ENCODE measurements at regions of chr16 and their contacts with region 1.

Region 1: DNA sequence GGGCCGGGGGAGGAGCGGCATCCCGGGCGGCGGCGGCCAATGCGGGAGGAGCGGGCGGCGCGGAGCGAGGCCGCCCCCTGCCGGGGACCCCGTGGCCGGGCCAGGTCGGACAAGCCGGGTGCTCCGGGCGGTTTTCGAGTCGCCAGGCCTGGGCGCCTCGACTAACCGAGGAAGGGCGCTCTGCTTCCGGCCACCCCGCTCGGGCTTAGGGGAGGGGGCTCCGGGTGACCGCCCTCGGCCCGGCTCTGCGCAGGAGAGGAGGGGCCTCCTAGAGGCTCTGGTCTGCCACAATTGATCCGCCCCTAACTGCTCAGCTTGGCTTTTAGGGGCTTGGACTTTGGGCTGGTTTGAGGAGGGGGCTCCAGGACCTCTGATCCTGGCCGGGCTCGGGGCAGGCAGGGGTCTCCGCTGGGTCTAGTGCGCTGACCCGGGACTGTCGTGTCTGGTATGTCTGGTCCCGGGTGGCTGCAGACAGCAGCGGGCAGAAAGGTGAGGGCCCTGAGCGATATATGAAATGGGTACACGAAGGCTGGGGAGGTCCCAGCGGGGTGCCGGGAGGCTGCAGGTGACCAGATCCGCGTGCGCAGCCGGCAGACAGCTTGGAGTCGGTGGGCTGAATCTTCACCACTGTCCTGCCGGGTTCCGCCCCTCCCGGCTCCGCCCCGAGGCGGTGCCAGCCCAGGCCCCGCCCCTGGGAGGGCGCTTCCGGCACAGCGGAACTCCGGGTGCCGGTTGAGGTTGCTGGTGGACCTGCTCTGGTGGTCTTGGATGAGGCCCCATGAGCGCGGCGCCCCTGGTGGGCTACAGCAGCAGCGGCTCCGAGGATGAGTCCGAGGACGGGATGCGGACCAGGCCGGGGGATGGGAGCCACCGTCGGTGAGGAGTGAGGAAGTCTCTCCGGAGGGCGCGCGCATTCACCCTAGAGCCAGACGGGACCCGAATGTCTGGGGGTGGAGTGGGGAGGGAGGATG is at the start of gene USB1:
- DNase-seq: peak; percentile 37 to 90
- H3K4me3 ChIP-seq: peak within 1 kb of the TSS; percentile 78 to 93
- H3K27ac ChIP-seq: peak within 1 kb of the TSS; percentile 85 to 95
- H3K4me1 ChIP-seq: peaks cover 12 to 19% of the 10 kb centered on the region in 2 donors
- H3K27me3 ChIP-seq: no peaks in the 10 kb centered on the region
- CTCF ChIP-seq: peak; percentile 47 to 64 (median 63)
- total RNA-seq, gene USB1: 133 TPM

Region 2: DNA sequence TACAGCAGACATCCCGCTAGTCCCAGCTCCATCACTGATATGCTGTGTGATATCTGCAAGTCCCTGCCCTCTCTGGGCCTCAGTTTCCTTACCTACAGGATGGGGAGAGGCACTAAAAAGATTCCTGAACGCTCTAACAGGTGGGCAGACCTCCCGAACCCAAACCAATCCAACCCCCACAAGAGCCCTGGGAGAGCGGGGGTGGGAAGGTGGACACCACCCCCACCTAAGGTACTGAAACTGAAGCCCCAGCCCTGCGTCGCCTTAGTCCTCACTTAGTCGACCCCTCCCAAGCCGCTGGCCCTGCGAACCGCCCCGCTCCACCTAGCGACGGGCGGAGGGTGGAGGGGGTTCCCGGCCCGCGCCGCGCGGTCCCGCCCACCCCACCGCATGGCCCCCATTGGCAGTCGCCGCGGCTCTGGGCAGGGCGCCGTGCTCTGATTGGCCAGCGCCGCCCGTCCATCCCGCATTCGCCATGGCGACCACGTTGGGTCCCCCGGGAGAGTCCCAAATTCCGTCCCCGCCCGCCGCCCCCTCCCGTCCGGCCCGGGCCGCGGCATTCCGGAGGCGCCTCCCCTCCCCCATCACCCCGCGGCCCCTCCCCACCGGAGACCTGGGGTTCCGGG is 465.2 kb before region 1 on chr16:
- intact Hi-C with region 1: loop called (anchors 2 kb)
- DNase-seq: peak; percentile 74 to 97
- H3K4me3 ChIP-seq: peak overlapping the region; percentile 92 to 93
- H3K27ac ChIP-seq: peak overlapping the region; percentile 89 to 90
- H3K4me1 ChIP-seq: peaks cover 19 to 24% of the 10 kb centered on the region in 2 donors
- H3K27me3 ChIP-seq: no peaks in the 10 kb centered on the region
- CTCF ChIP-seq: peak in 2 of 3 experiments; percentile 21 to 27

Region 3: GRCh38 chr16:57757326-57757786 is 243.6 kb before region 1 on chr16:
- intact Hi-C with region 1: loop called (anchors 1 kb)
- DNase-seq: peak; percentile 46 to 93
- H3K4me3 ChIP-seq: no peak overlapping the region
- H3K27ac ChIP-seq: no peak overlapping the region
- H3K4me1 ChIP-seq: no peaks in the 10 kb centered on the region
- H3K27me3 ChIP-seq: no peaks in the 10 kb centered on the region
- CTCF ChIP-seq: peak; percentile 92 to 98 (median 92)

Region 4: GRCh38 chr16:57899771-57900661 is 101.0 kb before region 1 on chr16:
- intact Hi-C with region 1: loop called (anchors 2 kb)
- DNase-seq: peak in 1 of 2 donors; percentile 82
- H3K4me3 ChIP-seq: no peak overlapping the region
- H3K27ac ChIP-seq: no peak overlapping the region
- H3K4me1 ChIP-seq: no peaks in the 10 kb centered on the region
- H3K27me3 ChIP-seq: no peaks in the 10 kb centered on the region
- CTCF ChIP-seq: peak; percentile 50 to 77 (median 75)

Region 5: GRCh38 chr16:58249780-58250478 is 248.9 kb after region 1 on chr16:
- intact Hi-C with region 1: loop called (anchors 5 kb)
- DNase-seq: peak; percentile 16 to 86
- H3K4me3 ChIP-seq: peak overlapping the region; percentile 77 to 78
- H3K27ac ChIP-seq: peak overlapping the region; percentile 52 to 73
- H3K4me1 ChIP-seq: peaks cover 3 to 9% of the 10 kb centered on the region in 2 donors
- H3K27me3 ChIP-seq: no peaks in the 10 kb centered on the region
- CTCF ChIP-seq: no peak

Region 6: GRCh38 chr16:58515125-58515870 is 514.3 kb after region 1 on chr16 and contains the start of gene SETD6:
- intact Hi-C with region 1: loop called (anchors 10 kb)
- DNase-seq: peak; percentile 64 to 92
- H3K4me3 ChIP-seq: peak within 1 kb of the TSS; percentile 89 to 92
- H3K27ac ChIP-seq: peak within 1 kb of the TSS; percentile 73 to 79
- H3K4me1 ChIP-seq: peaks cover 6 to 13% of the 10 kb centered on the region in 2 donors
- H3K27me3 ChIP-seq: no peaks in the 10 kb centered on the region
- CTCF ChIP-seq: peak; percentile 20 to 31 (median 25)
- total RNA-seq, gene SETD6: 24.4 TPM

Measured in ascending aorta (tissue), 2 donors.